Activated T-helper 1 cell treated with anti-CD3 and anti-CD28 coated beads, Interleukin-12 subunit alpha, Interleukin-12 subunit beta, Interleukin-2, Interleukin-4 antibody, amounts not matched to agents 30 ng/mL and 10 ng/mL and 1 ng/mL, durations not matched to agents 14 hours and 24 hours and 36 hours (primary cell): ENCODE measurements at regions of chr19 and their contacts with region 1.

Region 1: GRCh38 chr19:796692-797527 is at the start of gene PTBP1:
- DNase-seq: peak; percentile 99
- H3K4me3 Mint-ChIP-seq: peak within 1 kb of the TSS; percentile 92
- H3K27ac Mint-ChIP-seq: peak within 1 kb of the TSS; percentile 91
- H3K4me1 Mint-ChIP-seq: peaks cover 19% of the 10 kb centered on the region
- H3K27me3 Mint-ChIP-seq: no peaks in the 10 kb centered on the region
- total RNA-seq, gene PTBP1: 735 and 829 TPM in 2 replicates

Region 2: GRCh38 chr19:572140-572742 is 224.7 kb before region 1 on chr19 and contains the start of gene BSG:
- intact Hi-C with region 1: loop called (anchors 2 kb)
- DNase-seq: peak; percentile 99
- H3K4me3 Mint-ChIP-seq: peak within 1 kb of the TSS; percentile 88
- H3K27ac Mint-ChIP-seq: peak within 1 kb of the TSS; percentile 99
- H3K4me1 Mint-ChIP-seq: peaks cover 25% of the 10 kb centered on the region
- H3K27me3 Mint-ChIP-seq: peaks cover 6% of the 10 kb centered on the region
- total RNA-seq, gene BSG: 307 and 308 TPM in 2 replicates

Region 3: DNA sequence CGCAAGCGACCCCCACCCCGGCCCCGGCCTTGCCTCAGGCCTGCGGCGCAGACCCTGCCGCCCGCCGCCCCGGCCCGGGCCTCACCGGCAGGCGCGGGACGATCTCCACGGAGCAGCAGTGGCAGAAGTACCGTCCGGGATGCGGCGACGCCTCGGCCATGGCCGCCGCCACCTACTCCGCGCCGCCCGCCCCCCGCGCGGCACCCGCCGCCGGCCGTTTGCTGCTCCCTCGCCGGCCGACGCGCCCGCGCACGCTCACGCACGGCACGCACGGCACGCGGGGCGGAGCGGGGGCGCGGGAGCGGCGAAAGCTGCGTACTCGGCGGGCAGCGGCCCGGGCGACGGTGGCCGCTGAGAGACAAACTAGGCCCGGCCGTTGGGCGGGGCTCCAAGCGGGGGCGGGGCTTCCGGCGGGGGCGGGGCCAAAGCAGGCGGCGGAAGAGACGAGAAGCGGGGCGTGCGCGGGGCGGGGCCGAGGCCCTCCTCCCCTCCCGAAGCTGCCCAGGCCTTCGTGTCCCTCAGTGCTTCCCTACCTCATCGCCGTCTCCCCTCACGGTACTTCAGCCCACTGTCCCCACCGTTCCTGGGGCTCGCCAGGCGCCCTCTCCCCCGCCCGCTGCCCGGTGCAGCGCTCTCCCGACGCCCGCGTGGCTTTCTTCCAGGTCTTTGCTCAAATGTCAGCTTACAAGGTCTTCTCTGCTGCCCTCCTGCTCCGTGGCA is 133.8 kb before region 1 on chr19 and contains the start of gene RNF126:
- intact Hi-C with region 1: loop called (anchors 1 kb)
- DNase-seq: peak; percentile 84
- H3K4me3 Mint-ChIP-seq: peak within 1 kb of the TSS; percentile 95
- H3K27ac Mint-ChIP-seq: peak within 1 kb of the TSS; percentile 97
- H3K4me1 Mint-ChIP-seq: peaks cover 33% of the 10 kb centered on the region
- H3K27me3 Mint-ChIP-seq: no peaks in the 10 kb centered on the region
- total RNA-seq, gene RNF126: 107 and 110 TPM in 2 replicates

Region 4: DNA sequence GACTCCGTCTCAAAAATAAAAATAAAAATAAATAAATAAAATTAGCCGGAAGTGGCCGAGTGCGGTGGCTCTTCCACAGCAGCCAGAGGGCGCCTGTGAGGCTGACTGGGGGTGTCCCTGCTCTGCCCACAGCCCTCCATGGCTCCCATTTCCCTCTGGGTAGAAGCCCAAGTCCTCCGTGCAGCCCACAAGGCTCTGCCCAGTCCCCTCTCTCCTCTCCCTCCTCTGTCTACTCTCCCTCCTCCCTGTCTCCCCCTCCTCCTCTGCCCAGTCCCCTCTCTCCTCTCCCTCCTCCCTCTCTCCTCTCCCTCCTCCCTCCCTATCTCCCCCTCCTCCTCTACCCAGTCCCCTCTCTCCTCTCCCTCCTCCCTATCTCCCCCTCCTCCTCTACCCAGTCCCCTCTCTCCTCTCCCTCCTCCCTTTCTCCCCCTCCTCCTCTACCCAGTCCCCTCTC is 25.6 kb before region 1 on chr19:
- intact Hi-C with region 1: loop called (anchors 2 kb)
- DNase-seq: no peak
- H3K4me3 Mint-ChIP-seq: no peak overlapping the region
- H3K27ac Mint-ChIP-seq: no peak overlapping the region
- H3K4me1 Mint-ChIP-seq: peaks cover 5% of the 10 kb centered on the region
- H3K27me3 Mint-ChIP-seq: peaks cover 6% of the 10 kb centered on the region

Region 5: GRCh38 chr19:1275260-1275975 is 478.5 kb after region 1 on chr19 and contains the start of gene FAM174C:
- intact Hi-C with region 1: loop called (anchors 1 kb)
- DNase-seq: peak; percentile 93
- H3K4me3 Mint-ChIP-seq: peak within 1 kb of the TSS; percentile 93
- H3K27ac Mint-ChIP-seq: peak within 1 kb of the TSS; percentile 97
- H3K4me1 Mint-ChIP-seq: peaks cover 26% of the 10 kb centered on the region
- H3K27me3 Mint-ChIP-seq: no peaks in the 10 kb centered on the region
- total RNA-seq, gene FAM174C: 119 and 128 TPM in 2 replicates